ENCODE measurements at regions of chr1 and their contacts with region 1.

Region 1: DNA sequence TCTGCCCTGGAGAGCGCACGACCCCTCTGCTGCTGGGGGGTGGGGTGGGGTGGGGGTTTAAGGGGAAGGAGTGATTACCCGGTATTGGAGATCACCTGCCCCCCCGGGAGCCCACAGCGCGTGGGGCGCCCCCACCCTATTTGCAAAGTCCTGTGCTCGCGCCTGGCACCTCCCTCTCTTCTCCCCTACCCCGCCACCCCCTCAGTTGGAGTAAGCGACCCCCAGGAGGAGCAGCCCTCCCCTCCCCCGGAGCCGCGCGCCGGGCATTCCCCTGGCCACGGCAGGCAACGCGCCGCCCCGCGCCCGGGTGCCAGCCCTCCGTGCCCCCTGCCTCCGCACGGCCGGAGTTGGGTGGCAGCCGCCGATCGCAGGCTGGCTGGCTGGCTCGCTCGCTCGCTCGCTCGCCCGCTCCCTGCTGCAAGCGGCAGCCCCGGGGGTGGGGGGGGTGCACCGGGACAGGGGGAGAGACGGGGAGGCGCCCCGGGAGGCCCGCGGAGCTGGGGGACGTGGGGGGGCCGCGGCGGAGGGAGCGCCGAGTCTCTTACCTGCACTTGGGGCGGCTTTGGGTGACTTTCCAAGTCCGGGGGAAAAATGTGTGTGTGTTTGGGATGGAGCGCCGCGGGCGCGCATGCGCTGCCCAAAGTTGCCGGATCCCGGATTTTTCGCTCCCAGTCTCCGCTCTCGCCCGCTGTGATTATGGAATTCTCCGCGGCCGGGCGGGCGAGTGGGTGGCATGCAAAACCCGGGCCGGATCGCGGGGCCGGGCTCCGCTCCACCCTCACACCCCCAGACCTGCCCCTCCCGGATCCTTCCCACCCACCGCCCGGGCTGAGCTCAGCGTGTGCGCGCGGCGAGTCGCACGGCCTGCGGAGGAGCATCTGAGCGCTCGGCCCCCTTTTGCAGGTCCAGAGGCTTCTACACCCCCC is at the start of gene CASZ1:
- DNase-seq: peak; percentile 90
- H3K4me3 ChIP-seq: peak within 1 kb of the TSS; percentile 65 to 85 (median 78)
- H3K27ac ChIP-seq: peak within 1 kb of the TSS; percentile 79 to 92 (median 90)
- H3K4me1 ChIP-seq: peaks cover 0 to 46% (median 38%) of the 10 kb centered on the region in 4 donors
- H3K27me3 ChIP-seq: peaks cover 5 to 36% (median 11%) of the 10 kb centered on the region in 3 donors
- CTCF ChIP-seq: no peak
- EP300 ChIP-seq: peak in 1 of 4 donors; percentile 75
- POLR2A ChIP-seq: peak; percentile 27 to 72
- total RNA-seq, gene CASZ1: 12.7 to 47.9 (median 32.3) TPM

Region 2: DNA sequence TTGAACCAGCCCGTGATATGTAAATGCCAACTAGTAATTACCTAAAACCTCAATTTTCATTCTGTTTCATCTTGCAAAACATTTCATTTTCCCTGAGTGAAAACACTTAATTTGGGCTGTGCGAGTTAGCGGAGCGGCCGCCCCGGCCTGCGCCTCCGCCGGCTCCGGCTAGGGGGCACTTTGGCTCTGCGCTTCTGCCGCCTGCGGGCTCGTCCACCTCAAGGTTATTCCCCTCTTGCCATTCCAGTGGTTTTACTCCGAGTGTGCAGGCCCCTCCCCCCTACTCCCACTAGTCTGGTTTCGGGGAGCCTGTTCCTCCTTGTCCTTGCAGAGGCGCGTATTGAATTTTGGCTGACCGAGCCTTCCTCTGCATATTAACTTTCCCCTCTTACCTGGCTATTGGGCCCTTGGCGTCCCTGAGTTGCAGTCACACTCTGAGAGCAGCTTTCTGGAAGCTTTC is 266.0 kb before region 1 on chr1:
- intact Hi-C with region 1: loop called (anchors 2 kb)
- DNase-seq: peak; percentile 82
- H3K4me3 ChIP-seq: peak overlapping the region in 2 of 4 donors; percentile 5 to 18
- H3K27ac ChIP-seq: peak overlapping the region; percentile 25 to 90 (median 75)
- H3K4me1 ChIP-seq: peaks cover 0 to 55% (median 40%) of the 10 kb centered on the region in 4 donors
- H3K27me3 ChIP-seq: no peaks in the 10 kb centered on the region
- CTCF ChIP-seq: peak; percentile 69 to 81 (median 75)
- EP300 ChIP-seq: no peak
- POLR2A ChIP-seq: no peak

Region 3: DNA sequence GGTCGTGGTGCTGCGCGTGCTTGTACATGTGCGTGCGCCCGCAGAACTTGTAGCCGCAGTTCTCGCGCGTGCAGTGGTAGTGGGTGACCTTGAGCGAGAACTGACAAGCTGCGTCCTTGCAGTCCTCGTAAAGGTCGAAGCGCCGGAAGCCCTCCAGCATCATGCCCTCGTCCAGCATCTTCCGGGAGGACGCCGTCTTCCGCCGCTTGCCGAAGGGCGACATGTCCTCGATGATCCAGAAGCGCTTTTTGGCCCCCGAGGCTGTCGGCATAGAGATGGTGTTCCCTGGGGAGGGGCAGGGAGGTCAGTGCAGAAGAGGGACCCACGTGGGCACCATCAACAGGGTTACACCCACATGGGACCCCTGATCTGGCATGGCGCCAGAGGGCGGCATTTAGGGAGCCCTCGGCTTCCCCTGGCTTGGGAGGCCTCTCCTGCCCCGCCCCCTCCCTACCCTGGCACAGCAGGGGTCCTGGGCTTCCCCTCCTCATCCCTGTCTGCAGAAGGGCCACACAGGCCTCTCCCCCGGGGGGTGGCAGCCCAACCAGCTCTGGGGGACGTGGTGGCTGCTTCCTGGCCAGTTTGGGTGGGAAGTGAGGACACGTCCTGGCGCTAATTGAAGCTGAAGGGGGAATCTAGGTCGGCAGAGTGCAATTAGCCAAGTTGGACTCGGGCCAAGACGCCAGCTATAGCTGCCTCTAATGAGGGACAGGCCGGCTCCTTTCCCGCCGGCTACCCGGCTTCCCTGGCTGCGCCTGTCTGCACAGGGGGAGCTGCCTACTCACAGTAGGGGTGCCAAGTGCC is 156.3 kb before region 1 on chr1:
- intact Hi-C with region 1: loop called (anchors 5 kb)
- DNase-seq: no peak
- H3K4me3 ChIP-seq: no peak overlapping the region
- H3K27ac ChIP-seq: peak overlapping the region; percentile 60 to 88 (median 81)
- H3K4me1 ChIP-seq: peaks cover 0 to 74% (median 61%) of the 10 kb centered on the region in 4 donors
- H3K27me3 ChIP-seq: peaks cover 0 to 4% (median 0%) of the 10 kb centered on the region in 3 donors
- CTCF ChIP-seq: no peak
- EP300 ChIP-seq: no peak
- POLR2A ChIP-seq: no peak

Region 4: DNA sequence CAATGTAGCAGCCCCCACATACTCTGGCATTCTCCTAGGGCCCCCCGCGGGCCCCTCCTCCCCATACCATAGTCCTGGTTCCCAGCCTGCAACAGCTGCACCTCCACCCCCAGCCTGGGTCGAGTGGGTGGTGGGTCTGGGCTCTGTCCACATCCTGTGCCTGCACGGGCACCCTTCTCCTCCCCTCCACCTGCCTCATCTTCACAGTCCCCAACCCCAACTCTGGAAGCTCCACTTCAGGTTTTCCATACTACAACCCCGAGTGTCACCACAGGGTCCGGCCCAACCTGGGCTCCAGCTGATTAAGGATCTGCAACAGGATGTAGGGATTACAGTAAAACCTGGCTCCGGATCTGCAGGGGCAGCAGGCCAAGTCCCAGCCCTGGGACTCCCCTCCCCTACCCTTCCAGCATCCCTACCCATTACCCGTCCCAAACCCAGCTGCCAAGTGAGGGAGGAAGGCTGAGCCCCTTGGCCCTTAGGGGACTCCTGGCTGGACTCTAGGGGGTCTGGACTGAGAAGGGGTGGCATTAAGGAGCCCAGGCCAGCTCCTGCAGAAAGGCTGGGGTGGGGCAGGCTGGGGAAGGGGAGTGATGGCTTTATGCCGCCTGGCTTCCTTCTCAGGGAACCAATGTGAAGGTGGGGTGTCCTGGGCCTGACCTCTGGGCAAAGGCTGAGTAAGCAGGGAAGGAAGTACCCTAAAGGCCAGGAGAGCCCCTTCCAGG is 116.6 kb before region 1 on chr1:
- intact Hi-C with region 1: loop called (anchors 5 kb)
- DNase-seq: no peak
- H3K4me3 ChIP-seq: peak overlapping the region in 3 of 4 donors; percentile 6 to 13 (median 13)
- H3K27ac ChIP-seq: peak overlapping the region; percentile 87 to 98 (median 96)
- H3K4me1 ChIP-seq: peaks cover 4 to 100% (median 100%) of the 10 kb centered on the region in 4 donors
- H3K27me3 ChIP-seq: no peaks in the 10 kb centered on the region
- CTCF ChIP-seq: no peak
- EP300 ChIP-seq: no peak
- POLR2A ChIP-seq: no peak

Region 5: GRCh38 chr1:10888286-10888685 is 92.0 kb after region 1 on chr1:
- intact Hi-C with region 1: no loop called
- DNase-seq: no peak
- H3K4me3 ChIP-seq: no peak overlapping the region
- H3K27ac ChIP-seq: no peak overlapping the region
- H3K4me1 ChIP-seq: peaks cover 0 to 8% (median 6%) of the 10 kb centered on the region in 4 donors
- H3K27me3 ChIP-seq: peaks cover 14 to 71% (median 31%) of the 10 kb centered on the region in 3 donors
- CTCF ChIP-seq: no peak
- EP300 ChIP-seq: no peak
- POLR2A ChIP-seq: no peak

Region 6: DNA sequence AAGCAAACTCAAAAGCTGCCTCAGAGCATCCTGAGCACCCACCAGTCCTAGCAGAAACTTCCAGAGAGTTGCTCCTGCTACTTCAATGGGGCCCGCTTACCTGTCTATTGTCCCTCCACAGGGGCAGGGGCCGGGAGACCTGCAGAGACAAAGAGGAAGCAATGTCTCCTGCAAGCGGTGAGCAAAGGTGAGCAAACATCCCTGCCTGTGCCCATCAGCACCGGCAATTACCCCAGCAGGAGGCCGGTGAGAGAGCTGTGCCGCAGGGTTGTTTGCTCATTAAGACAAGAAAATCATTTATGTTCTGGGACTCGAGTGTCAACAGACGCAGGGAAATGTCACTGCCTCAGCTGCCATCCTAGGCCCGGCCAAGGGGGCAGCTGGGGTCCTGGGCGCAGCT is 162.3 kb after region 1 on chr1:
- intact Hi-C with region 1: no loop called
- DNase-seq: no peak
- H3K4me3 ChIP-seq: no peak overlapping the region
- H3K27ac ChIP-seq: no peak overlapping the region
- H3K4me1 ChIP-seq: peaks cover 0 to 8% (median 4%) of the 10 kb centered on the region in 4 donors
- H3K27me3 ChIP-seq: no peaks in the 10 kb centered on the region
- CTCF ChIP-seq: no peak
- EP300 ChIP-seq: no peak
- POLR2A ChIP-seq: no peak